A673 (cell line): ENCODE measurements at regions of chr2 and their contacts with region 1.

Region 1: DNA sequence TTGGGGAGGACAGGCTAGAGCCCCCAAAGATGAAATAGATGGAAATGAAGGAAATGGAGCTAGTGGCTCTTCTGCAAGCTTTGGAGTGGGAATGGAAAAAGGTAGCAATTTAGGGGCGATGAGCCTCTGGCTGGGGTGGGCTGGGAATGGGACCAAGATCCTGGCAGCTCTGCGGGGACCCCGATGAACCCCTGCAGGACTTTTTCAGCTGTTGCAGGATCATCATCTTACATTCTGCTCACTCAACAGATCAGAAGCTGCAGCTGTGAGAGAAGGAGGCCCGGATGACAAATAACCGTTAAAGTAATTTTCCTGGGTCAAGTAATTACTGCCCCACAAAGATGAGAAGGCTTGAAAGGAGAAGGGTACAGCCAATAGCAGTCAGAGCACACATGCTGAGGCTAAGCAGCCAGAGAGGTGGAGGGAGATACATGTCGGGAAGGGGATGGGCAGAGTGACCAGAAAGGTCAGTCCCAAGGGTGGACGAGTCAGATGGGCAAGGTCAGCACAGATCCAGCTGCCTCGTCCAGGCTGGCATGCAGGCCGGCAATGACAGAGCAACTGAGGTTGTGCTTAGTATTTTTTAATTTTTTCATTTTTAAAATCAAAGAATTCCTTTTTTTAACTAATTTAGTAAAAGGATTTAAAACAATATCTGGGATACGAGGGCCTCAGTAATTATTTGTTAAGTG is 245.0 kb upstream of the RAB6C start:
- DNase-seq: no peak
- H3K4me3 ChIP-seq: no peak overlapping the region
- H3K27ac ChIP-seq: no peak overlapping the region
- H3K4me1 ChIP-seq: peaks cover 28% of the 10 kb centered on the region
- H3K27me3 ChIP-seq: no peaks in the 10 kb centered on the region
- CTCF ChIP-seq: no peak

Region 2: GRCh38 chr2:129605646-129606045 is 128.8 kb before region 1 on chr2:
- CTCF ChIA-PET with region 1: no interaction called
- POLR2A ChIA-PET with region 1: no interaction called
- intact Hi-C with region 1: loop called (anchors 5 kb)
- DNase-seq: peak; percentile 87
- H3K4me3 ChIP-seq: peak overlapping the region; percentile 24
- H3K27ac ChIP-seq: peak overlapping the region; percentile 96
- H3K4me1 ChIP-seq: peaks cover 34% of the 10 kb centered on the region
- H3K27me3 ChIP-seq: no peaks in the 10 kb centered on the region
- CTCF ChIP-seq: no peak

Region 3: GRCh38 chr2:129801575-129801974 is 67.1 kb after region 1 on chr2:
- CTCF ChIA-PET with region 1: no interaction called
- POLR2A ChIA-PET with region 1: no interaction called
- intact Hi-C with region 1: loop called (anchors 5 kb)
- DNase-seq: no peak
- H3K4me3 ChIP-seq: no peak overlapping the region
- H3K27ac ChIP-seq: no peak overlapping the region
- H3K4me1 ChIP-seq: peaks cover 8% of the 10 kb centered on the region
- H3K27me3 ChIP-seq: peaks cover 23% of the 10 kb centered on the region
- CTCF ChIP-seq: no peak

Region 4: GRCh38 chr2:130370490-130370889 is 636.0 kb after region 1 on chr2:
- CTCF ChIA-PET with region 1: no interaction called
- POLR2A ChIA-PET with region 1: no interaction called
- intact Hi-C with region 1: no loop called
- DNase-seq: no peak
- H3K4me3 ChIP-seq: no peak overlapping the region
- H3K27ac ChIP-seq: no peak overlapping the region
- H3K4me1 ChIP-seq: no peaks in the 10 kb centered on the region
- H3K27me3 ChIP-seq: no peaks in the 10 kb centered on the region
- CTCF ChIP-seq: no peak